GM10248 (cell line): ENCODE measurements at regions of chr5 and their contacts with region 1.

Region 1: GRCh38 chr5:132797651-132798050 is 15.5 kb upstream of the SOWAHA start:
- DNase-seq: no peak
- CTCF ChIP-seq: no peak

Region 2: DNA sequence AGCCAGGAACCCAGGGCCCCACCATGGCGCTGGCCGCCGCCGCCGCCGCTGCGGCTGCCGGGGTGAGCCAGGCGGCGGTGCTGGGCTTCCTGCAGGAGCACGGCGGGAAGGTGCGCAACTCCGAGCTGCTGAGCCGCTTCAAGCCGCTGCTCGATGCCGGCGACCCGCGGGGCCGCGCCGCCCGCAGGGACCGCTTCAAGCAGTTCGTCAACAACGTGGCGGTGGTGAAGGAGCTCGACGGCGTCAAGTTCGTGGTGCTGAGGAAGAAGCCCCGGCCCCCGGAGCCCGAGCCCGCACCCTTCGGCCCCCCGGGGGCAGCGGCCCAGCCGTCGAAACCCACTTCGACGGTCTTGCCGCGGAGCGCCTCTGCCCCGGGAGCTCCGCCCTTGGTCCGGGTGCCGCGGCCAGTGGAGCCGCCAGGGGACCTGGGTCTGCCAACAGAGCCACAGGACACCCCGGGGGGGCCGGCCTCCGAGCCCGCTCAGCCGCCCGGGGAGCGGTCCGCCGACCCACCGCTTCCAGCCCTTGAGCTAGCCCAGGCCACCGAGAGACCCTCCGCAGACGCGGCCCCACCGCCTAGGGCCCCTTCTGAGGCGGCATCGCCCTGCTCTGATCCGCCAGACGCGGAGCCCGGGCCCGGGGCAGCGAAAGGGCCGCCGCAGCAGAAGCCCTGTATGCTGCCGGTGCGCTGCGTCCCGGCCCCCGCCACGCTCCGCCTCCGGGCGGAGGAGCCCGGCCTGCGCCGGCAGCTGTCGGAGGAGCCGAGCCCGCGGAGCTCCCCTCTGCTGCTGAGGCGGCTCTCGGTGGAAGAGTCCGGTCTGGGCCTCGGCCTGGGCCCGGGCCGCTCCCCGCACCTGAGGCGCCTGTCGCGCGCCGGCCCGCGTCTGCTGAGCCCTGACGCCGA is 16.2 kb after region 1 on chr5:
- CTCF ChIA-PET with region 1: interaction called, 29 read pairs
- POLR2A ChIA-PET with region 1: no interaction called
- DNase-seq: peak; percentile 59
- CTCF ChIP-seq: no peak